Right cardiac atrium (tissue), 5 donors: ENCODE measurements at regions of chr7 and their contacts with region 1.

Region 1: GRCh38 chr7:158856883-158857668 is 718 bp downstream of the DYNC2I1 start:
- DNase-seq: no peak
- ATAC-seq: no peak
- H3K4me3 ChIP-seq: peak overlapping the region; percentile 77
- H3K27ac ChIP-seq: peak overlapping the region; percentile 74
- H3K4me1 ChIP-seq: no peaks in the 10 kb centered on the region
- H3K27me3 ChIP-seq: no peaks in the 10 kb centered on the region

Region 2: GRCh38 chr7:158824028-158824427 is 33.0 kb before region 1 on chr7:
- intact Hi-C with region 1: loop called in 1 of 4 experiments (anchors 5 kb)
- DNase-seq: no peak
- ATAC-seq: no peak
- H3K4me3 ChIP-seq: no peak overlapping the region
- H3K27ac ChIP-seq: no peak overlapping the region
- H3K4me1 ChIP-seq: peaks cover 17% of the 10 kb centered on the region
- H3K27me3 ChIP-seq: no peaks in the 10 kb centered on the region